Posterior vena cava (tissue), 2 donors: ENCODE measurements at regions of chr18 and their contacts with region 1.

Region 1: GRCh38 chr18:35864916-35865315 is 107.6 kb upstream of the RMP24 start:
- DNase-seq: no peak

Region 2: GRCh38 chr18:36186911-36187834 is 322.3 kb after region 1 on chr18 and contains the start of gene MOCOS:
- intact Hi-C with region 1: loop called in 1 of 2 experiments (anchors 5 kb)
- DNase-seq: peak; percentile 89
- total RNA-seq, gene MOCOS: 1.2 to 1.3 TPM